Activated naive CD4-positive, alpha-beta T cell treated with anti-CD3 and anti-CD28 coated beads for 36 hours (primary cell): ENCODE measurements at regions of chr6 and their contacts with region 1.

Region 1: DNA sequence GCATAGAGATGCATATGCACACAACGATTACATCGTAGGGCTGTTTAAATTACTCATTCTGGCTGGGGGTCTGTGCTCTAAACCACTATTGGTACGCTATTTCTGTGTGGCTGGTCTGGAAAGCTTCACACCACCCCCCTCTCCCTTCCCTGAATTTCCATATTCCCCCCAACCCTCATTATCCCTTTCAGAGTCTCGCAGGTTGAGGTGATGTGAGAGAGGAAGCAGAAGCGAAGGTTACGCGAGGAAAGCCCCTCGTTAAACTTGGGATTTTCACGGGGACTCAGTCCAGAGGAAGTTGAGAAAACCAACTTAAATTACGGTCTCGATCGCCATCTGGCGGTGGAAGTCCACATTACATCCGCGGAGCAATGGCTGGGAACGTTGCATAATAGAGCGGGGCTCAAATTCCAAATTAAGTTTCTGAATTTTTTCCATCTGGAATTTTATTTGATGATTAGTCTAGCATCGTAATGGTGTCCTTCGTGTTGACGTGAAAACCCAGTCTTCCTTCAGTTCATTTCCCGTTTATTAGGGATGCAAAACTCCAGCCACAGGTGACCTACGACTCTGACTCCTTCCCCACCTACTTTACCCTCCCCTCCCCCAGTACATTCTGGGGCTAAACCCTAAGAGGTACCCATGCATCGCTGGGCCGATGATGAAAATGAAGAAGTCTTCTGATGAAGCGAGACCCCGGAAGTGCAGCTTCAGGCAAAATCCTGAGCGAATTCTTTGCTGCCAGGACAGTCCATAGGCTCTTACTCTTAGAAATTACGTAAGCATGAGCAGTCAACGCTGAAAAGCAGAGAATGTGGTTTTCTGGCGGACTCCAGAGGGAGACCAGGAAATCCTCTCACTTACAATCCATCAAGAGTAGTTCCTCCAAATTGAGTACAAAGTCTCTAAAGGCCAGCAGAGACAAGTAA is 19.7 kb downstream of the HLA-DOB start:
- DNase-seq: peak; percentile 91
- H3K4me3 Mint-ChIP-seq: peak overlapping the region; percentile 47
- H3K27ac Mint-ChIP-seq: no peak overlapping the region
- H3K4me1 Mint-ChIP-seq: peaks cover 22% of the 10 kb centered on the region
- H3K27me3 Mint-ChIP-seq: peaks cover 20% of the 10 kb centered on the region

Region 2: GRCh38 chr6:32445321-32445854 is 351.7 kb before region 1 on chr6:
- CTCF ChIA-PET with region 1: no interaction called
- intact Hi-C with region 1: no loop called
- DNase-seq: no peak
- H3K4me3 Mint-ChIP-seq: no peak overlapping the region
- H3K27ac Mint-ChIP-seq: no peak overlapping the region
- H3K4me1 Mint-ChIP-seq: no peaks in the 10 kb centered on the region
- H3K27me3 Mint-ChIP-seq: peaks cover 22% of the 10 kb centered on the region

Region 3: GRCh38 chr6:32627831-32628230 is 169.3 kb before region 1 on chr6:
- CTCF ChIA-PET with region 1: no interaction called
- intact Hi-C with region 1: no loop called
- DNase-seq: no peak
- H3K4me3 Mint-ChIP-seq: no peak overlapping the region
- H3K27ac Mint-ChIP-seq: no peak overlapping the region
- H3K4me1 Mint-ChIP-seq: peaks cover 23% of the 10 kb centered on the region
- H3K27me3 Mint-ChIP-seq: no peaks in the 10 kb centered on the region

Region 4: DNA sequence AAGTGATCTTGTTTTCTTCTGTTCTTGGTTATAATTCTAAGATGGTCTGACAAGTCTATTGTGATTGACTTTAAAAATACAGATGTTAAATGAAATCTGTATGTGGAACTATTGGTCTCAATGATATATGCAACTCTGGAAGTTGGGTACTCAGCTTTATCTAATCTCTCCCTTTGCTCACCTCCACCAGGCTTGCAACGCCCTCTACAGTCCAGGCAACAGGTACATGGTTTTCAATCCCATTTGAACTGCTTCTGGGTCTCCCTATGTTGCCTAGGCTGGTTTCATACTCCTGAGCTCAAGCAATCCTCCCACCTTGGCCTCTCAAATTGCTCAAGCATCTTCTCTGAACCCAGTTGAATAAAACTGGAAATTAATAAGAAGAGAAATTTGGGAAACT is 105.1 kb before region 1 on chr6:
- CTCF ChIA-PET with region 1: interaction called, 3 read pairs
- intact Hi-C with region 1: loop called (anchors 2 kb)
- DNase-seq: peak; percentile 81
- H3K4me3 Mint-ChIP-seq: no peak overlapping the region
- H3K27ac Mint-ChIP-seq: no peak overlapping the region
- H3K4me1 Mint-ChIP-seq: peaks cover 3% of the 10 kb centered on the region
- H3K27me3 Mint-ChIP-seq: peaks cover 9% of the 10 kb centered on the region

Region 5: DNA sequence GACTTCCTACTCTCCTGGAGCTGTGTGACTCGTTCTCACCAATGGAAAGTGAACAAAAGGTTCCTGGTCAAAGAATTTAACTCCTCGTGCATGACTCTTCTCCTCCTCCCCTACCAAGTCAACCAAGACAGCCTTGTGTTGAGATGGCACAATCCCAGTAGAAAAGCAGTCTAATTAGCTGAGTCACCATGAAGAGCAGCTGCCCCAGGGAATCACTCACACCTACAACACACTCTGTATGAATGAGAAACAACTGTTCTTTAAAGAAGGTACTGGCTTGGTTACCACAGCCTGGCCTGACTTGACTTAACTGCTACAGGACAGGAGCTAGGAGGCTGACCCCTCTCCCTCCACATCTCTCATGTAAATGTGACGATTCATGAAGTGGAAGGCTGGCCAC is 22.6 kb after region 1 on chr6:
- CTCF ChIA-PET with region 1: no interaction called
- intact Hi-C with region 1: no loop called
- DNase-seq: no peak
- H3K4me3 Mint-ChIP-seq: no peak overlapping the region
- H3K27ac Mint-ChIP-seq: no peak overlapping the region
- H3K4me1 Mint-ChIP-seq: peaks cover 2% of the 10 kb centered on the region
- H3K27me3 Mint-ChIP-seq: no peaks in the 10 kb centered on the region